ENCODE measurements at regions of chr2 and their contacts with region 1.

Region 1: DNA sequence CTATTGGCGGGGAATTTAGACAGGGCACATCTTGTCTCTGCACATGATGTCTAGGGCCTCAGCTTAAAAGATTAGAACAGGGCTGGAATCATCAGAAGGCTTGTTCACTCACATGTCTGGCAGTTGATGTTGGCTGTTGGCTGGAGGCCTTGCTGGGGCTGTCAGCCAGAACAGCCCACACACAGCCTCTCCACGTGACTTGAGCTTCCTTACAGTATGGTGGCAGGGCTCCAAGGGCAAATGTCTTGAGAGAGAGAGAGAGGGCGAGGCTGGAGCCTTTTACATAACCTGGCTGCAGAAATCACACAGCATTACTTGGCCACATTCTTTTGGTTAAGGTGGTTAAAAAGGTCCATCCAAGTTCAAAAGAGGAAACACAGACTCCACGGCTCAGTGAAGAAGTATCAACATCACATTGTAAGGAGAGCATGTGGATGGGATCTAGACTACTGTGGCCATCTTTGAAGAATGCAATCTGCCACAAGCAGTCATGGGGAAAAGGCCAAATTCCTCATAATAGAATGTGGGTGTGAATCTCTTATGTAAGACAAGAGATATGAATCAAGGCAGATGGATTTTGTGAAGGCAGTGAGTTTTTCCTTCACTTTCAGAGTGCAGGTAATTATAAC is 30.4 kb downstream of the SRSF7 start:
- DNase-seq: peak; percentile 81
- H3K4me3 ChIP-seq: no peak overlapping the region
- H3K27ac ChIP-seq: peak overlapping the region; percentile 88
- H3K4me1 ChIP-seq: peaks cover 47% of the 10 kb centered on the region
- H3K27me3 ChIP-seq: no peaks in the 10 kb centered on the region
- CTCF ChIP-seq: no peak

Region 2: GRCh38 chr2:38496927-38497669 is 223.6 kb before region 1 on chr2:
- intact Hi-C with region 1: no loop called
- DNase-seq: peak; percentile 43
- H3K4me3 ChIP-seq: no peak overlapping the region
- H3K27ac ChIP-seq: peak overlapping the region; percentile 12
- H3K4me1 ChIP-seq: peaks cover 32% of the 10 kb centered on the region
- H3K27me3 ChIP-seq: no peaks in the 10 kb centered on the region
- CTCF ChIP-seq: no peak

Region 3: GRCh38 chr2:38581193-38582147 is 139.3 kb before region 1 on chr2:
- intact Hi-C with region 1: loop called (anchors 2 kb)
- DNase-seq: no peak
- H3K4me3 ChIP-seq: no peak overlapping the region
- H3K27ac ChIP-seq: no peak overlapping the region
- H3K4me1 ChIP-seq: peaks cover 25% of the 10 kb centered on the region
- H3K27me3 ChIP-seq: no peaks in the 10 kb centered on the region
- CTCF ChIP-seq: peak; percentile 77

Region 4: GRCh38 chr2:38672445-38673391 is 48.0 kb before region 1 on chr2:
- intact Hi-C with region 1: no loop called
- DNase-seq: no peak
- H3K4me3 ChIP-seq: no peak overlapping the region
- H3K27ac ChIP-seq: no peak overlapping the region
- H3K4me1 ChIP-seq: peaks cover 9% of the 10 kb centered on the region
- H3K27me3 ChIP-seq: no peaks in the 10 kb centered on the region
- CTCF ChIP-seq: no peak

Region 5: GRCh38 chr2:38829971-38830370 is 109.2 kb after region 1 on chr2:
- intact Hi-C with region 1: no loop called
- DNase-seq: no peak
- H3K4me3 ChIP-seq: no peak overlapping the region
- H3K27ac ChIP-seq: no peak overlapping the region
- H3K4me1 ChIP-seq: peaks cover 5% of the 10 kb centered on the region
- H3K27me3 ChIP-seq: no peaks in the 10 kb centered on the region
- CTCF ChIP-seq: no peak

Measured in left ventricle myocardium inferior (tissue), 1 donor.